Calu3 (cell line): ENCODE measurements at regions of chr4 and their contacts with region 1.

Region 1: GRCh38 chr4:21765810-21766407 is 182.7 kb downstream of the KCNIP4 start:
- DNase-seq: peak; percentile 49
- H3K4me3 Mint-ChIP-seq: no peak overlapping the region
- H3K27ac Mint-ChIP-seq: no peak overlapping the region
- H3K4me1 Mint-ChIP-seq: peaks cover 18% of the 10 kb centered on the region
- H3K27me3 Mint-ChIP-seq: peaks cover 16% of the 10 kb centered on the region
- CTCF ChIP-seq: peak; percentile 46

Region 2: GRCh38 chr4:21512353-21512752 is 253.6 kb before region 1 on chr4:
- CTCF ChIA-PET with region 1: interaction called, 3 read pairs
- intact Hi-C with region 1: loop called (anchors 1 kb)
- DNase-seq: no peak
- H3K4me3 Mint-ChIP-seq: no peak overlapping the region
- H3K27ac Mint-ChIP-seq: no peak overlapping the region
- H3K4me1 Mint-ChIP-seq: no peaks in the 10 kb centered on the region
- H3K27me3 Mint-ChIP-seq: peaks cover 36% of the 10 kb centered on the region
- CTCF ChIP-seq: no peak